Activated CD4-positive, alpha-beta T cell treated with anti-CD3 and anti-CD28 coated beads, Interleukin-2, amount 10 ng/mL, durations not matched to agents 7 days and 5 days (primary cell): ENCODE measurements at regions of chr20 and their contacts with region 1.

Region 1: DNA sequence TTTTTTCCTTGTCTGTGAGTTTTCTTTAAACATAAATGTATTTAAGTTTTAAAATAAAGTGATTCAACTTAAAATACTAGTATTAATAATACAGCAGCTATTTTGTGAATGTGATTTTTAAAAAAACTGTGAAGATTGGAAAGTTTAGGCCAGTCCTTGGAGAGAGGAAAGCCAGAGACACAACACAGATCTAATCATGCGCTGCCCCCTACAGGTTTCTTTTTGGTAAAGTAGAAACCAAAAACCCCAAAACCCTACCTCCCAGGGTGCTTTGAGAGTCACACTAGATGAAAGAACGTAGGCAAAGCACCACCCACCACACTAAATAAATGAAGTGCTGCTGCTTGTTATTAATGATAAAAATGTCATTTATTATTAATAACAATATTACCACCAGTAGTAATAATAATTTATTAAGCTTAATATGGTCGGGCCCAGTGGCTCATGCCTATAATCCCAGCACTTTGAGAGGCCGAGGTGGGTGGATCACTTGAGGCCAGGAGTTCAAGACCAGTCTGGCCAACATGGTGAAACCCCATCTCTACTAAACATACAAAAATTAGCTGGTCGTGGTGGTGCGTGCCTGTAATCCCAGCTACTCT is 33.7 kb downstream of the SLC9A8 start:
- DNase-seq: peak; percentile 78
- H3K4me3 Mint-ChIP-seq: no peak overlapping the region
- H3K27ac Mint-ChIP-seq: no peak overlapping the region
- H3K4me1 Mint-ChIP-seq: peaks cover 28% of the 10 kb centered on the region
- H3K27me3 Mint-ChIP-seq: no peaks in the 10 kb centered on the region

Region 2: GRCh38 chr20:49610701-49611538 is 235.4 kb before region 1 on chr20:
- CTCF ChIA-PET with region 1: interaction called, 15 read pairs
- POLR2A ChIA-PET with region 1: no interaction called
- DNase-seq: peak; percentile 75
- H3K4me3 Mint-ChIP-seq: peak overlapping the region; percentile 20
- H3K27ac Mint-ChIP-seq: peak overlapping the region; percentile 23
- H3K4me1 Mint-ChIP-seq: peaks cover 25% of the 10 kb centered on the region
- H3K27me3 Mint-ChIP-seq: no peaks in the 10 kb centered on the region

Region 3: GRCh38 chr20:49768204-49769047 is 77.9 kb before region 1 on chr20:
- CTCF ChIA-PET with region 1: no interaction called
- POLR2A ChIA-PET with region 1: no interaction called
- DNase-seq: peak; percentile 75
- H3K4me3 Mint-ChIP-seq: peak overlapping the region; percentile 11
- H3K27ac Mint-ChIP-seq: peak overlapping the region; percentile 48
- H3K4me1 Mint-ChIP-seq: peaks cover 36% of the 10 kb centered on the region
- H3K27me3 Mint-ChIP-seq: peaks cover 70% of the 10 kb centered on the region